Upper lobe of right lung (tissue), 1 donor: ENCODE measurements at regions of chr17 and their contacts with region 1.

Region 1: DNA sequence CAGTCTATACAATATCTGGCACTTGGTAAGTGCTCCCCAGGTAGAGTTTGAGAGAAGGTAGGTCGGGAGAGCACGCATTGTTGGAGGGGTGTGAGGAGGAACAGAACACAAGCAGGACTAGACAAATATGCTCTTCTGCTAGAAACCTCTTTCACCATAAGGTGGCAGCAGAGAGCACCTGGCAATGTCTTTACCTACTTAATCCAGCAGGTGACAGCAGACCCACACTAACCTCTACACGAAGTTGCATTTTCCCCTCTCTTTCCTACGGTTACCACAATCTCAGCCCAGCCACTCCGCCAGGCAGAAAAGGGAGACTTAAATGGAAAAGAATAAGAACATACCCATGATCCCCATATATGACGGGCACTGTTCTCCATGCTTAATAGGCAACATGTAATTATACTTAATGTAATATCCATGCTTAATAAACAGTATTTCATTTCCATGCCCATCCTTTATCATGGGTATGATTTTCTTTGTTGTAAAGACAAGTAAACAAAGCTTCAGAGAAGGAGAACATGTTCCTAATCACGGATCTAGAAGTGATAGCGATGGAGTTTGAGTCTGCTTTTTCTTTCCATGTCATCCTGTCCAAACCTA is 55.1 kb upstream of the CCL2 start:
- DNase-seq: no peak
- ATAC-seq: peak; percentile 98
- H3K4me3 ChIP-seq: no peak overlapping the region
- H3K27ac ChIP-seq: no peak overlapping the region
- H3K4me1 ChIP-seq: no peaks in the 10 kb centered on the region
- H3K27me3 ChIP-seq: peaks cover 13% of the 10 kb centered on the region
- CTCF ChIP-seq: peak; percentile 100

Region 2: DNA sequence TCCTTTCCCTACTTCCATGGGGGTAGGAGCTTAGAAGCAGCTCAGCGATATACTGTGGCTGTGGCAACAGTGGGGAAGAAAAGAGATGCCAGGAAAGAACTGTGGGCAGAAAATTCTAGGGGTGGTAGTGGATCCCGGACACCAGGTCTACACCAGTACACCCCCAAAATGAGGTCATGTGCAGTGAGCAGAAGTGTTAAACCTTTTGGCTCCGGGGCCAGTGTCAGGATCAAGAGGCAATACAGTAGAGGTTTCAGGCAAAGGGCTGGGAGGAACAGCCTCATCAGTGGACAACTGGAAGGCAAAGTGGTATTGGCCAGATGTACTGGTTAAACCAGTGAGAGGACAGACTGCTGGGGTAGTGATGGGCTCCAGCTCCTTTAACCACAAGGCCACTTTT is 108.1 kb before region 1 on chr17:
- intact Hi-C with region 1: no loop called
- DNase-seq: no peak
- ATAC-seq: no peak
- H3K4me3 ChIP-seq: no peak overlapping the region
- H3K27ac ChIP-seq: no peak overlapping the region
- H3K4me1 ChIP-seq: no peaks in the 10 kb centered on the region
- H3K27me3 ChIP-seq: no peaks in the 10 kb centered on the region
- CTCF ChIP-seq: no peak

Region 3: GRCh38 chr17:34306466-34306865 is 106.4 kb after region 1 on chr17:
- intact Hi-C with region 1: loop called (anchors 10 kb)
- DNase-seq: no peak
- ATAC-seq: peak; percentile 73
- H3K4me3 ChIP-seq: no peak overlapping the region
- H3K27ac ChIP-seq: no peak overlapping the region
- H3K4me1 ChIP-seq: peaks cover 18% of the 10 kb centered on the region
- H3K27me3 ChIP-seq: no peaks in the 10 kb centered on the region
- CTCF ChIP-seq: peak; percentile 47

Region 4: GRCh38 chr17:34361478-34362061 is 161.5 kb after region 1 on chr17:
- intact Hi-C with region 1: loop called (anchors 5 kb)
- DNase-seq: peak; percentile 94
- ATAC-seq: peak; percentile 97
- H3K4me3 ChIP-seq: no peak overlapping the region
- H3K27ac ChIP-seq: no peak overlapping the region
- H3K4me1 ChIP-seq: peaks cover 2% of the 10 kb centered on the region
- H3K27me3 ChIP-seq: no peaks in the 10 kb centered on the region
- CTCF ChIP-seq: peak; percentile 100